ENCODE measurements at regions of chr9 and their contacts with region 1.

Region 1: GRCh38 chr9:126704873-126705766 is 91.4 kb downstream of the LMX1B start:
- DNase-seq: peak; percentile 88
- H3K27ac ChIP-seq: peak overlapping the region; percentile 63
- CTCF ChIP-seq: peak; percentile 99

Region 2: GRCh38 chr9:126532019-126532462 is 173.1 kb before region 1 on chr9:
- CTCF ChIA-PET with region 1: no interaction called
- POLR2A ChIA-PET with region 1: no interaction called
- DNase-seq: no peak
- H3K27ac ChIP-seq: no peak overlapping the region
- CTCF ChIP-seq: no peak

Region 3: DNA sequence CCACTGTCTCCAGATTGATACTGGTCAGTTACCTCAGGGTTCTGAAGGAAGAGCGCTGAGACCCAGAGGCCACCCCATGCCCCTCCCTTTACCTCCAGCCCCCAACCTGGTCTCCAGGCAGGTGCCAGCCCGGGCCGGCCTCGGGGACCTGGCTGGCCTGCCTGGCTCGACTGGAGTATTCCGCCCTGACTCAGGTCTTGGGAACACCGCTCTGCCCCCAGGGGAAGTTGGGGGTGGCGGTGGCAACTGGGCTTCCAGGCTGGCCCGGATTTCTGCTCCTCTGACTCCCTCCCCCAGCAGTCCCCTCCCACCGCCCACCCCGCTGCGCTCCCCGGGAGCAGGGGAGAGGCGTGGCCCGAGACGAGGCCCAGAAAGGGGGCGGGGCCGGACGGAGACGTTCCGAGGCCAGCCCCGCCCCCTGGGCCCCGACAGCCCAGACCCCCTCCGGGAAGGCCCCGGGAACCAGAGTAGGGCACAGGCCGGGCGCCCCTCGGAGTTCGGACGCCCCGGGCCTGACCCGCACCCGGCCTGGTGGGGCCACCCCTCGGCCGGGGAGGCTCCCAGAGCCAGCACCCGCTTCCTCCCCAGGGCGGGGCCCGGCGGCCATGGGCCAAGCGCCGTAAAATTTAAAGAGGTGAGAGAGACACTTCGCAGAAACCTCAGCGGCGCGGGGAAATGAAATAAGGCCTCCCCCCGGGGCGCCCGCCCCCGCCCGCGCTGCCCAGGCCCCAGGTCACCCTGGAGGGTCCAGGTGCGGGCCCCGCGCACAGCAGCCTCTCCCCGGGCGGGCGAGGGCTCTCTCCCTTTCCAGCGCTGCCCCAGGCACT is 17.3 kb after region 1 on chr9:
- CTCF ChIA-PET with region 1: interaction called, 66 read pairs
- POLR2A ChIA-PET with region 1: no interaction called
- DNase-seq: peak; percentile 94
- H3K27ac ChIP-seq: peak overlapping the region; percentile 64
- CTCF ChIP-seq: no peak

Region 4: DNA sequence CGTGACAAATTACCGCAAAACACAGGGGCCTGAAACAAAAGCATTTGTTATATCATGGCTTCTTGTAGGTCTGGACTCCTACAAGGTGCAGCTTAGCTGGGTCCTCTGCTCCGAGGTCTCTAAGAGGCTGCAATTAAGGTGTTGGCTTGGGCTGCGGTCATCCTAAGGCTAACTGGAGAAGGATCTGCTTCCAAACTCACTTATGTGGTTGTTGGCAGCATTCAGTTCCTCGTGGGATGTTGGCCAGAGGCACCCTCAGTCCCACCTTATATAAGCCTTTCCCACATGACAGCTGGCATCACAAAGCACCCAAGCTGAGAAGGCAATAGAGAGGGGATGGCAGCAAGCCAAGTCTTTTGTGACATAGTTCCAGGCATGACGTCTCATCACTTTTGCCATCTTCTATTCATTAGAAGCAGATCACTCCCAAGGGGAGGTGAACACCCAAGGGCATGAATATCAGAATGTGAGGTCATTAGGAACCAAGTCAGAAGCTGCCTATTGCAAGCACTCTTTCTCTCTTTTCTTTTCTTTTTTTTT is 51.8 kb after region 1 on chr9:
- CTCF ChIA-PET with region 1: interaction called, 28 read pairs
- POLR2A ChIA-PET with region 1: no interaction called
- DNase-seq: no peak
- H3K27ac ChIP-seq: no peak overlapping the region
- CTCF ChIP-seq: no peak

Region 5: DNA sequence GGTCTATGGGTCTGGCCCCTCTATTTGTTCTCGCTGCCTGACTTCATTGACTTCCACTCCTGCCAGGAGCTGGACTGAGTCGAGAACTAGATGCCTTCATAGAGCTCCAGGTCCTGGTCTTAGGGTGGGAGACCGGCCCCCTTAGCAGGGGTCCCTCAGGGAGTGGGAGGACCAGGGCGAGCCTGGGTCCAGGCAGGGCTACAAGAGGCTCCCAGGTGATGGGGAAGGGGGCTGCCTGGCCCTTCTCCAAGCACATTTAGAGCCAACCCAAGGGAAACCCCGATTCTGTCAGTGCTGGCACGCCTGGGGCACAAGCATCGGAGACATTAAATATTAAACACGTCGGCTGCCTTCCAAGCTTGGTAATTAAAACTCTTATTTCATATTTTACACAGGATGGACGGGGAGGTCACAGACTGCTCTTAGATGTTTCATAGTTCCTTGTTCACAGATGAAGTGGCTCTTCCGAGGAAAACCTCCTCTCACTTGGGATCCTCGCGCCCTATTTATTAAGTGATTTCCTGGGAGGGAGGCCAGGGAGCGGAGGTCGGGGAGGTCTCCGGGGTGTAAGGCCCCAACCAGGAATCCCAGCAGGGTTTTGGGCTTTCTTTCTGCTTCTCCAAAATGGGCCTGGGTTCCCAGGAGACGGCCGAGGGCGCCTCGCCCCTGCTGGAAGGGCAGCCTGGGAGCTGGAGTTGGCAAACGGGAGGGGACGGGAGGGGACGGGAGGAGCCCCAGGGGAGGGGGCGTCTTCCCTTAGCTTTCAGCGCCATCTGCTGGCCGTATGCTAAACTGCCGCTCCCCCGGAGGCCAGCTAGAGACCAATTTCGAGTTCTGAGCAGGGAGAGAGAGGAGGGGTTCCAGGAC is 76.3 kb after region 1 on chr9:
- CTCF ChIA-PET with region 1: interaction called, 231 read pairs
- POLR2A ChIA-PET with region 1: interaction called, 4 read pairs
- DNase-seq: peak; percentile 95
- H3K27ac ChIP-seq: no peak overlapping the region
- CTCF ChIP-seq: peak; percentile 99